Transverse colon (tissue), 4 donors: ENCODE measurements at regions of chr11 and their contacts with region 1.

Region 1: GRCh38 chr11:34395916-34396550 is 38.2 kb upstream of the ABTB2 start:
- DNase-seq: no peak
- H3K4me3 ChIP-seq: no peak overlapping the region
- H3K27ac ChIP-seq: no peak overlapping the region
- H3K4me1 ChIP-seq: no peaks in the 10 kb centered on the region
- H3K27me3 ChIP-seq: no peaks in the 10 kb centered on the region
- CTCF ChIP-seq: no peak
- EP300 ChIP-seq: no peak
- POLR2A ChIP-seq: no peak

Region 2: GRCh38 chr11:33829433-33830141 is 566.4 kb before region 1 on chr11:
- in situ Hi-C with region 1: loop called in 1 of 4 experiments (anchors 25 kb)
- intact Hi-C with region 1: no loop called
- DNase-seq: peak; percentile 55
- H3K4me3 ChIP-seq: peak overlapping the region in 3 of 4 donors; percentile 15 to 47 (median 32)
- H3K27ac ChIP-seq: no peak overlapping the region
- H3K4me1 ChIP-seq: peaks cover 7 to 10% (median 8%) of the 10 kb centered on the region in 4 donors
- H3K27me3 ChIP-seq: peaks cover 69% of the 10 kb centered on the region
- CTCF ChIP-seq: peak; percentile 68 to 73 (median 69)
- EP300 ChIP-seq: no peak
- POLR2A ChIP-seq: no peak

Region 3: GRCh38 chr11:34417202-34417601 is 21.2 kb after region 1 on chr11:
- in situ Hi-C with region 1: no loop called
- intact Hi-C with region 1: no loop called
- DNase-seq: no peak
- H3K4me3 ChIP-seq: no peak overlapping the region
- H3K27ac ChIP-seq: no peak overlapping the region
- H3K4me1 ChIP-seq: no peaks in the 10 kb centered on the region
- H3K27me3 ChIP-seq: no peaks in the 10 kb centered on the region
- CTCF ChIP-seq: no peak
- EP300 ChIP-seq: no peak
- POLR2A ChIP-seq: no peak

Region 4: GRCh38 chr11:34552270-34552669 is 156.2 kb after region 1 on chr11:
- in situ Hi-C with region 1: no loop called
- intact Hi-C with region 1: no loop called
- DNase-seq: no peak
- H3K4me3 ChIP-seq: no peak overlapping the region
- H3K27ac ChIP-seq: no peak overlapping the region
- H3K4me1 ChIP-seq: no peaks in the 10 kb centered on the region
- H3K27me3 ChIP-seq: no peaks in the 10 kb centered on the region
- CTCF ChIP-seq: no peak
- EP300 ChIP-seq: no peak
- POLR2A ChIP-seq: no peak